ENCODE measurements at regions of chr18 and their contacts with region 1.

Region 1: GRCh38 chr18:48663931-48664847 is 125.4 kb downstream of the CTIF start:
- DNase-seq: peak; percentile 45 to 78
- ATAC-seq: peak; percentile 68

Region 2: GRCh38 chr18:48475635-48476549 is 188.3 kb before region 1 on chr18:
- intact Hi-C with region 1: loop called (anchors 2 to 5 kb)
- DNase-seq: peak in 1 of 2 donors; percentile 18
- ATAC-seq: peak; percentile 86

Region 3: GRCh38 chr18:48493434-48494230 is 170.6 kb before region 1 on chr18:
- intact Hi-C with region 1: no loop called
- DNase-seq: no peak
- ATAC-seq: peak; percentile 61

Region 4: GRCh38 chr18:48538531-48539405 is 125.4 kb before region 1 on chr18 and contains the start of gene CTIF:
- intact Hi-C with region 1: loop called in 1 of 2 experiments (anchors 10 kb)
- DNase-seq: peak; percentile 96 to 97
- ATAC-seq: peak; percentile 87
- total RNA-seq, gene CTIF: 14.8 to 18.5 TPM

Region 5: GRCh38 chr18:48605408-48605845 is 58.8 kb before region 1 on chr18:
- intact Hi-C with region 1: no loop called
- DNase-seq: no peak
- ATAC-seq: no peak

Region 6: GRCh38 chr18:48754993-48755473 is 90.8 kb after region 1 on chr18:
- intact Hi-C with region 1: no loop called
- DNase-seq: no peak
- ATAC-seq: no peak